GM18951 (cell line): ENCODE measurements at regions of chr6 and their contacts with region 1.

Region 1: DNA sequence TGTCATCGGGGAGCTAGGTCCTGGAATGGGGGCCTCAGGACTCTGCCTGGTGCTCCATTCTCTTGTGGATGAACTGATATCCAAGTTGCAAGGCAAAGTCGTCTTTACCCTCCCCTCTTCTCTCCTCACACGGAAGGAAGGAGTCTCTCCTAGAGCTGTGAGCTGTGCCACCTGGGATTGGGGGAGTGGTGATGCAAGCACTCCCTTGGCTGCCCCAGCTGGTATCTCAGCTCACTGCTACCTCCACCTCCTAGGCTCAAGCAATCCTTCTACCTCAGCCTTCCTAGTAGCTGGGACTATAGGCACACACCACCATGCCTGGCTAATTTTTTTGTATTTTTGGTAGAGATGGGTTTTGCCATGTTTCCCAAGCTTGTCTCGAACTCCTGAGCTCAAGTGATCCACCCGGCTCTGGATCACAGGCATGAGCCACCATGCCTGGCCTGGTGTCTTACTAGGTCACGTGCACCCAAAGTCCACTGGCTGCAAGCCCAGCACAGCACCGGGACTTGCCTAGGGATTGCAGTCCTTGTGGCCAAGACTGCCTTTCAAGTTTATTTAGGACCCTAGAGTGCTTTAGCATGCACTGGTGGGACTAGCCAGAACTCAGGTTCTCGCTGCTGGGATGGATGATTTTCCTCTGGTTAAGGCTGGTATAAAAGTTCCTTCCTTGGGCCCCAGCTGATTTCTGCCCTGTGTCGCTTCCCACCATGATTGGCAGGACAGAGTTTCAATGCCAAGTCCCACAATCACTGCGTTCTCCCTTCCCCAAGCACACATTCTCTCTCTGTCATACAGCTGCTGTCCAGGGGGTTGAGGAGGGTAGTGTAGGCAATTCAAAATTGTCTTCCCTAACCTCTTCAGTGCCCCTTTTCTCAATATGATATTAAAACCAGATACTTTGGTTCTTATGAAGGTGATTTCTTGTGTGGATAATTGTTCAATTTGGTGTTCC is 33.5 kb downstream of the SMAP1 start:
- POLR2A ChIP-seq: no peak

Region 2: GRCh38 chr6:70413114-70413991 is 287.8 kb before region 1 on chr6 and contains the start of gene FAM135A:
- in situ Hi-C with region 1: no loop called
- POLR2A ChIP-seq: peak; percentile 78

Region 3: DNA sequence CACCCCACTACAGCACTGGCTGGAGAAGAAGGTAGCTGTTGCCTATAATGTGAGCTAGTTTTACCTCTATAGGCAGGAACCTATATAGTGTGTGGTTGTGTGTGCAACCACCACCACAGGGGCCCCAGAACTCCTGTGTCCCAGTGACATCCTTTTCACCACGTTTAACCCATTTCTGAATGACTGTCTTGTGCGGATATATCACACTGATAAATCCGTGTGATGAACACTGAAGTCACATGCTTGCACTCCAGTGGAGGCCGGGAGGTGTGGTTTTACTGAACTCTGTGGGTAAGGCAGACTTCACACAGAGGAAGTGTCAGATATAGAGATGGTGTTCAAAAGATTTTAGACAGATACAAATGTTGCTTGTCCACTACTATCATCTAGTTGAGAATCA is 102.0 kb before region 1 on chr6:
- in situ Hi-C with region 1: no loop called
- POLR2A ChIP-seq: no peak

Region 4: DNA sequence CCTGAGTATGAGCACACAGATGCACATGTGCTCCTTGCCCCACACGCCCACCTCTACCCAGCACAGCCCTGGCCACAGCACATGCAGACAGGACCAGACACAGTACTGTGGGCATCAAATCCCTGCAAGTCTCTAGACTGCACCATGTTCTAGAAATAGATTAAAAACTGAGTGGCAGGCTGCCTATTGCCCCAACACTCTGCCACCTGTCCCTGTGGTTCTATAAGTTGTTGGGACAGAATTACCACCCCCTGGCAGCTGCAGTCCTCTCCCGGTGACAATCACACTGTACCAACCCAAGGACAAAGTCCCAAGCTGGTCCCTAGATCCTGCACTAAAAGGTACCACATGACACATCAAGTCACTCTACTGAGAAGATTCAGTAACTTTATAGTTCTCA is 185.5 kb after region 1 on chr6:
- in situ Hi-C with region 1: loop called (anchors 5 kb)
- POLR2A ChIP-seq: no peak